ENCODE measurements at regions of chr16 and their contacts with region 1.

Region 1: DNA sequence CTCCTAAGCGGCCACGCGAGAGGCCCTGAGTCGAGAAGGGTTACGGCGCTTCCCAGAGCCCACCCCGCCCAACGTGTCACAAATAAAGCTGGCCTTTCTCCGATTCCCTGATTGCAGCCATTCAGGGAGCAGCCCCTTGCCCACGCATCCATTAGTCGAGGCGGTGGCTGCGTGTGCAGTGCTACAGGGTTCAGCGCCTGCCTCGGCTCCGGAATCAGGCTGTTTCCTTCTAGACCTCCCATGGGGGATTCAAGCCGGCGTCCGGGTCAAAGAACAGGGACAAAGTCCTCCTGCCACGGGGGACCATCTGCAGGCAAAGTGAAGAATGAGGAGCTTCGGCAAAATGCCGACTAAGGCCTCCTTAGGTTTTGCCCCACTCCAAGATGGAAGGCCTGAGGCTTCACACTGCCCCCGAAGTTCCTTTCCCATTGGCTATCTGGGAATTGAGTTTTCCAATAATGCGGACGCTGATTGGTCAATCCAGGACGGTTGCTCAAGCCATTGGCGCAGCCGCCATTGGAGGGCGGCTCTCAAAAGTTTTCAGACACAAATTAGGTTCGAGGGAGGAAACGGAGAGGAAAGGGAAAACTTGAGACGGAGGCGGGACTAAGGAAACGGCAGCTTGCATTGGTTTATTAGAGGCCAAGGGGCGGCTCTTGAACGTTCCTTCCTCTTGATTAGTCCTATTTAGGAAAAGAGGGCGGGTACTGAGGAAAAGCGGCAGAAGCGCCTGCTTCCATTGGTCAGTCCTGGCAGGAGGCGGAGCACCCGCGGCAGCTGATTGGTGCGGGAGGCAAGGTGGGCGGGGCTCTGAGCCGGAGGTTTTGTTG is 430 bp upstream of the KATNB1 start:
- DNase-seq: peak; percentile 98
- H3K4me3 Mint-ChIP-seq: peak overlapping the region; percentile 91
- H3K27ac Mint-ChIP-seq: peak overlapping the region; percentile 96
- H3K4me1 Mint-ChIP-seq: peaks cover 19% of the 10 kb centered on the region
- H3K27me3 Mint-ChIP-seq: no peaks in the 10 kb centered on the region

Region 2: GRCh38 chr16:57185944-57186871 is 548.9 kb before region 1 on chr16 and contains the starts of genes PSME3IP1 and RSPRY1:
- CTCF ChIA-PET with region 1: no interaction called
- intact Hi-C with region 1: loop called (anchors 1 kb)
- DNase-seq: peak; percentile 100
- H3K4me3 Mint-ChIP-seq: peak within 1 kb of the TSS; percentile 97
- H3K27ac Mint-ChIP-seq: peak within 1 kb of the TSS; percentile 95
- H3K4me1 Mint-ChIP-seq: peaks cover 52% of the 10 kb centered on the region
- H3K27me3 Mint-ChIP-seq: no peaks in the 10 kb centered on the region
- total RNA-seq, gene PSME3IP1: 106 to 110 TPM
- total RNA-seq, gene RSPRY1: 25.7 to 28.7 TPM

Region 3: GRCh38 chr16:57475711-57476339 is 259.3 kb before region 1 on chr16:
- CTCF ChIA-PET with region 1: no interaction called
- intact Hi-C with region 1: loop called (anchors 1 kb)
- DNase-seq: peak; percentile 96
- H3K4me3 Mint-ChIP-seq: no peak overlapping the region
- H3K27ac Mint-ChIP-seq: peak overlapping the region; percentile 63
- H3K4me1 Mint-ChIP-seq: peaks cover 22% of the 10 kb centered on the region
- H3K27me3 Mint-ChIP-seq: no peaks in the 10 kb centered on the region

Region 4: DNA sequence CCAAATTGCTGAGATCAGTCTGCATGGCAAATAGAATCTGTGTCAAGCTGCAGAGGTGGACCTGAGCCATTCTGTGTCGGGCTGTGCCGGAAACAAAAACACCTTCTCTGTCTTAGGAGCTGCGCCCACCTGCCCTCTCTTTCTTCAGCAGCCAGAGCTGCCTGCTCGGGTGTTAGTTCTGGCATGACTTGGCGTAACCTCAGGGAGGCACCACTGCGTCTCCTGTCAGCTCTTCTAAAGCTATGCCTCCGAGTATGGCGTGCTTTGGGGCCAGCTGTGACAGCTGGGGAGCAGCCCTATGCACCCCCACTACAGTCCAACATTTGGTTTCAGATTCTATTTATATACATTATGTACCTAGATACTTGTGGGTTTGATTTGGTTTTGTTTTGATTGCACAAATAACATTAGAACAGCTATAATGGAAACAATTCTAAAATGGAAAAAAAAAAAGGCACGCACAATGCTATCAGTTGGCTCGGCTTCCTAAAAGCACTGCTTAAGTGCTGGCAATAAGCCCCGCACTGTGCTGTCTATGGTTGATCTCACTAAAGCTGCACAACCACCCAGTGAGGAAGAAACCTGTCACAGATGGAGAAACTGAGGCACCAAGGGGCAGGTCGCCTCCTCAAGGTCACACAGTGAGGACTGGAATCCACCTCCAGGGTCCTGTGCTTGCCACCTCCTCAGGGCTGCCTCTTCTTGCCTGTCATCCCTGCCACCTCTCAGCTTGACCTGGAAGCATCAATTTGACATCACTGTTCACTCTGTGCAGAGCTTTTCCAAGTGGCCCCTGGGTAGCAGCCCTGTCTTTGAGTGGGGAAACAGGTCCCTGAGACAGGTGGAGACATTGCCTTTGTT is 125.4 kb before region 1 on chr16:
- CTCF ChIA-PET with region 1: no interaction called
- intact Hi-C with region 1: loop called (anchors 1 kb)
- DNase-seq: peak; percentile 92
- H3K4me3 Mint-ChIP-seq: peak overlapping the region; percentile 45
- H3K27ac Mint-ChIP-seq: peak overlapping the region; percentile 86
- H3K4me1 Mint-ChIP-seq: peaks cover 40% of the 10 kb centered on the region
- H3K27me3 Mint-ChIP-seq: no peaks in the 10 kb centered on the region

Region 5: GRCh38 chr16:57810197-57811031 is 75.3 kb after region 1 on chr16:
- CTCF ChIA-PET with region 1: no interaction called
- intact Hi-C with region 1: loop called (anchors 2 kb)
- DNase-seq: peak; percentile 82
- H3K4me3 Mint-ChIP-seq: no peak overlapping the region
- H3K27ac Mint-ChIP-seq: no peak overlapping the region
- H3K4me1 Mint-ChIP-seq: peaks cover 21% of the 10 kb centered on the region
- H3K27me3 Mint-ChIP-seq: peaks cover 40% of the 10 kb centered on the region

Region 6: DNA sequence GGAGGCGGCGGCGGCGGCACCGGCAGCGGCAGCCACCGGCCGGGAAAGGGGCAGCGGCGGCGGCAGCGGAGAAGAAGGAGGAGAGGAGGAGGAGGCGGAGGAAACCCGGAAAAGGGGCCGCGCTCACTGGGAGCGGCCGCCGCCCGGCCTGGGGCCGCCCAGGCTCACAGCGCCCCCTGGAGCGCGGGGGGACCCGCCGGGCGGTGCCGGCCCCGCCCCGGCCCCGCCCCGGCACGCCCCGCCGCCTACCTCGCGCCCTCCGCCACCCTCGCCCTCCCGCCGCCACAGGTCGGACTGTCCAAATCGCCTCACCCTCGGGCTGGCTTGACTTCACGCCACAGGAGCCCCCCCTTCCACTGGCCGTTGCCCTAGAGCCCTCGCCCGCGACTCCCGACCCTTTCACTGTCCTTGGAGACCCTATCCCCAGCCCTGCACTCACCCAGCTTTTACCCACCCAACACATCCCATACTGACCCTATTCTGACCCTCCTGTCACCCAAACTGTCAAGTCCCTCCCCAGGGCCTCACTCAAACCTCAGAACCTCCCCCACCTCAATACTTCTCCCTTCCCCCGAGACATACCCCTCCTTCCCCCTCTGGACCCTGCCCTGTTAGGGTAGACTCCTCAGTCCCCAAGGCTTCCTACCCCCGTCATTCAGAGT is 463.0 kb after region 1 on chr16 and contains the start of gene CSNK2A2:
- CTCF ChIA-PET with region 1: no interaction called
- intact Hi-C with region 1: loop called (anchors 5 kb)
- DNase-seq: peak; percentile 64
- H3K4me3 Mint-ChIP-seq: peak within 1 kb of the TSS; percentile 81
- H3K27ac Mint-ChIP-seq: peak within 1 kb of the TSS; percentile 66
- H3K4me1 Mint-ChIP-seq: peaks cover 30% of the 10 kb centered on the region
- H3K27me3 Mint-ChIP-seq: peaks cover 7% of the 10 kb centered on the region
- total RNA-seq, gene CSNK2A2: 86.0 to 86.7 TPM